Heart right ventricle (tissue), 16 donors: ENCODE measurements at regions of chr1 and their contacts with region 1.

Region 1: GRCh38 chr1:111290630-111291029 is at the start of gene CHIA:
- DNase-seq: peak in 1 of 2 donors; percentile 37
- ATAC-seq: peak in 4 of 8 donors; percentile 55 to 62 (median 58)
- H3K4me3 ChIP-seq: no peak within 1 kb of the TSS
- H3K27ac ChIP-seq: no peak within 1 kb of the TSS
- H3K4me1 ChIP-seq: peaks cover 0 to 3% (median 0%) of the 10 kb centered on the region in 9 donors
- H3K27me3 ChIP-seq: peaks cover 0 to 8% (median 0%) of the 10 kb centered on the region in 7 donors
- CTCF ChIP-seq: no peak
- total RNA-seq, gene CHIA: not detected

Region 2: GRCh38 chr1:111605576-111605975 is 314.9 kb after region 1 on chr1:
- intact Hi-C with region 1: loop called in 1 of 10 experiments (anchors 5 kb)
- DNase-seq: peak in 1 of 2 donors; percentile 38
- ATAC-seq: peak; percentile 54 to 90 (median 72)
- H3K4me3 ChIP-seq: no peak overlapping the region
- H3K27ac ChIP-seq: peak overlapping the region in 2 of 10 donors; percentile 27 to 53
- H3K4me1 ChIP-seq: peaks cover 0 to 50% (median 10%) of the 10 kb centered on the region in 9 donors
- H3K27me3 ChIP-seq: no peaks in the 10 kb centered on the region
- CTCF ChIP-seq: peak in 1 of 9 donors; percentile 7